OCI-LY7 (cell line): ENCODE measurements at regions of chr11 and their contacts with region 1.

Region 1: DNA sequence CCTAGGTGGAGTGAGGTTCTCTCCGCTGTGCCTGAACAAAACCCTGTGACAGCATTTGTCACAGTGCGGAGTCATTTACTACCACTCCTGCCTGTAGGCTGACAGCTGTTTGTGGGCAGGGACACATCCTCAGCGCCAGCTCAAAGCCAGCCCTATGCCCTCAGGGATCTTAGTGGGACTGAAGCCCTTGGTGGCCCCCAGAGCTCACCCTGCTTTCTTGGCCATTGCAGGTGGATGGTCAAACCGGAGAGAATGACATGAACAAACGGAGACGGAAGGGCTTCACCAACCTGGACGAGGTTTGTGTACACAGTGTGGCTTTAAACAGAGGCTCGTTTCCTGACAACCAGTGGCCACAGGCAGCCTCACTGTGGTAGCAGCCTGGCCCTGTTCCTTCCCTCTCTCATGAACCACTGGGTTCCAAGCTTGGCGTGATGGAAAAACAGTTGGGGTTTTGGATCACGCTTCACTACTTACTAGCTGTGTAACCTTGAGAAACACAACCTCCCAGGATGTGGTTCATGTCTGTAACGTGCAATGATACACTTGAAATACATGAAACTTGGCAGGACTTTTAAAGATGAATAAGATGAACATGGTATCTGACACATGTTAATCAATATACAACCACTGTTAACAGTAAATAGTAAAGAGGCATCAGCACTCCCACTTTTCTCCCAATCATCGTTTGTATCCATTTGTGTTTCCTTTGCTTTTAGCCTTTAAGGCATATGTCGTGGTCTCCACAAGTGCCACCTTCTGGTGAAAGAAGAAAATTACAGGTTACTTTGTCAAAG is 125.8 kb downstream of the MICAL2 start:
- DNase-seq: peak; percentile 41
- H3K4me3 ChIP-seq: no peak overlapping the region
- H3K27ac ChIP-seq: no peak overlapping the region
- H3K4me1 ChIP-seq: no peaks in the 10 kb centered on the region
- CTCF ChIP-seq: peak; percentile 79

Region 2: GRCh38 chr11:12122083-12122482 is 114.1 kb before region 1 on chr11:
- CTCF ChIA-PET with region 1: no interaction called
- POLR2A ChIA-PET with region 1: no interaction called
- intact Hi-C with region 1: loop called (anchors 10 kb)
- DNase-seq: no peak
- H3K4me3 ChIP-seq: no peak overlapping the region
- H3K27ac ChIP-seq: no peak overlapping the region
- H3K4me1 ChIP-seq: no peaks in the 10 kb centered on the region
- CTCF ChIP-seq: peak; percentile 41